HAP-1 (cell line): ENCODE measurements at regions of chr11 and their contacts with region 1.

Region 1: DNA sequence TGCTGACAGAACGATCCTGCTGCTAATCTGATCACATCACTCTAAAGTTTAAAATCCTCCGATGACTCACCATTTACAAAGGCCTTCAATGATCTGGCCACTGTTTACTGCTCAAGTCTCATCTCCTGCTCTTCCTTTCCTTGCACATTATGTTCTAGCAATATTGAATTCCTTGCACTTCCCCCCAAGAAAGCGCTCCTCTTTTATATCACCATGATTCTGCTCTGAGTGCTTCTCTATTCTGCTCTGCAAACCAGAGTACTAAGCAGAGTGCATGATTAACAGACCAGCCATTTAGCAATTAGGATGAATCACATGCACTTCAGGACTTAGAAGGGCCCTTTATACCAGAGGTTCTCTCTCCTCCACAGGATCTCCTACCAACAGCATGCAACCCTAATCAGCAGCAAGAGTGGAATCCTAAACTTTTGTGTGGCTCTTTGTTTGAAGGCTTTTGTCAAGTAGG is 1122.8 kb upstream of the CCDC90B start:
- DNase-seq: peak; percentile 42 to 87
- H3K4me3 ChIP-seq: no peak overlapping the region
- H3K4me1 ChIP-seq: peaks cover 19% of the 10 kb centered on the region
- H3K27me3 ChIP-seq: no peaks in the 10 kb centered on the region

Region 2: DNA sequence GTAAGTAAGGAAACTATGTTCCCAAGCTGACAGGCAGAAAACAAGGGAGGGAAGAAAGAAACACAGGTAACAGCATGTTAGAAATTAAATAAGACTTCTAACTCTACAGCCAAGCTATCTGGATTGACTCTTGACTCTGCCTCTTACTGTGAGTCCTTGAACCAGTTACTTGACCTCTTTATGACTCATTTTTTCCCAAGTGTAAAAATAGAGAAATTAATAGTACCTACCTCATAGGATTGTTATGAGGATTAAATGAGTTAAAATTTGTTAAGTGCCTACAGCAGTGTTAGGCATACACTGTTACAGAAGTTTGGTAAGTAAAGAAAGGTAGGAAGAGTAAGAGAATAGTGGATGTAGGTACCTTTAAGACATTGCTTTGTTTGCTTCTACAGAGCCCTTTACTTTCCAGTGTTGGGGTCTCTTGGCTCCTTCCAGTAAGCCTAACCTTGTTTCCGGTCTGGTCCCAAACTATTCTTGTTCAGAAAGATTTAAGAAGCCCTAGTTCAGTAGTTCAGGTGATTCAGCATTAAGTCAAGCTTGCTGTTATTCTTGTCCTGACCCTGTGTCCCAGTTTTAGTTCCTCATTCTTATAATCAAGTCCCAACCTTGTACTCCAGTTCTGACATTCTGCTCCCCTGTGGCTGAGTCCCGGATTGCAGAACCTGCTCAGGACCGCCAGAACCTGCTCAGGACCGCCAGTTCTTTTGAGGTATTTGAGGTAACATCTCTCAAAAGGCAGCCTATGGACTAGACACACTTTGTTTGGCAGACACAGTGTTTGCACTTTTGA is 159.4 kb before region 1 on chr11:
- in situ Hi-C with region 1: no loop called
- DNase-seq: no peak
- H3K4me3 ChIP-seq: no peak overlapping the region
- H3K4me1 ChIP-seq: peaks cover 10% of the 10 kb centered on the region
- H3K27me3 ChIP-seq: peaks cover 21% of the 10 kb centered on the region

Region 3: DNA sequence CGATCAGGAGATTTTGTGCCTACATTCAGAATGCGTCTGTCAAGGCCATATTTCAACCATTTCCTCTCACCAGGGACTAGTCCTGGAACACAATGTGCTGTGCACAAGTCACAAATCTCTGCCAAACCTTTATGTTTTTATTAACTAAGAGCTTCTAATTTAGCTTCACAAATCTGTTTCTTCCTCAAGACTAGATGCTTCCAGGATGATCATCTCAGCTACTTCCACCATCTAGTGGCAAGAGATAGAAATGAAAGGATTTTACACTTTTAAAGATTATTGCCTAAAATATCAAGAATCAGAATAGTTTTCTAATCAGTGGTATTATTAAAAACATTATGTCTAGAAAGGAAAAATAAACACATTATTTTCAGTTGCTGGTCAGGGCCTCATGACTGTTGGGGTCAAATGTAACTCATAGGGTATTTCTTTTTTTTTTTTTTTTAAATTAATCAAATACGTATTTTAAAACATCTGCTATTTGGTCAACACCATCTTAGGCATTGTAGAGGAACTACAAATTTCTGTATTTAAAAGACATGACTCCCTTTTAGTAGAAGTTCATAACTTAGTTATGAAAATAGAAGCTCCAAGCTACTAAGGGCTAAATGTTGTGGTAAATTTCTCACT is 115.6 kb after region 1 on chr11:
- in situ Hi-C with region 1: loop called (anchors 10 kb)
- DNase-seq: peak in 1 of 2 experiments; percentile 50
- H3K4me3 ChIP-seq: no peak overlapping the region
- H3K4me1 ChIP-seq: peaks cover 2% of the 10 kb centered on the region; the same call in 1 of the 2 replicates
- H3K27me3 ChIP-seq: no peaks in the 10 kb centered on the region

Region 4: DNA sequence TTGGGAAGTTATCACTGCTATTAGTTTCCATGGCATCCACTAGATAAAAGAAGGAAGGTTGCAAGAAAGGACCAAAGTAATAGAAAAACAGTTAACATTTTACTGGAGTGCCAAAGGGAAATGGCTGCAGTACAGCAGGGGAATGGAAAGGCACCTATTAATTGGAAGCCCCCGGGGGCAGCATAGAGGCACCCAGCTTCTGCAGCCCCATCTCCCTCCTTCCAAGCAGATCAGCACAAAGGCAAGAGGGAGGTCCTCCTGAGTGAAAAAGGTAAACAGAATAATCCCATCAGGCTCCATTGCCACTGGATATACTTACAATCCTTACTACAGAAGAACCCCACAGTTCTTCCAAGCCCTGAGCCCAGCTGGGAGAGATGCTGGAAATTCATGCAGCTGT is 331.1 kb after region 1 on chr11:
- in situ Hi-C with region 1: no loop called
- DNase-seq: no peak
- H3K4me3 ChIP-seq: no peak overlapping the region
- H3K4me1 ChIP-seq: no peaks in the 10 kb centered on the region; the same call in 1 of the 2 replicates
- H3K27me3 ChIP-seq: no peaks in the 10 kb centered on the region